Caco-2 (cell line): ENCODE measurements at regions of chr1 and their contacts with region 1.

Region 1: DNA sequence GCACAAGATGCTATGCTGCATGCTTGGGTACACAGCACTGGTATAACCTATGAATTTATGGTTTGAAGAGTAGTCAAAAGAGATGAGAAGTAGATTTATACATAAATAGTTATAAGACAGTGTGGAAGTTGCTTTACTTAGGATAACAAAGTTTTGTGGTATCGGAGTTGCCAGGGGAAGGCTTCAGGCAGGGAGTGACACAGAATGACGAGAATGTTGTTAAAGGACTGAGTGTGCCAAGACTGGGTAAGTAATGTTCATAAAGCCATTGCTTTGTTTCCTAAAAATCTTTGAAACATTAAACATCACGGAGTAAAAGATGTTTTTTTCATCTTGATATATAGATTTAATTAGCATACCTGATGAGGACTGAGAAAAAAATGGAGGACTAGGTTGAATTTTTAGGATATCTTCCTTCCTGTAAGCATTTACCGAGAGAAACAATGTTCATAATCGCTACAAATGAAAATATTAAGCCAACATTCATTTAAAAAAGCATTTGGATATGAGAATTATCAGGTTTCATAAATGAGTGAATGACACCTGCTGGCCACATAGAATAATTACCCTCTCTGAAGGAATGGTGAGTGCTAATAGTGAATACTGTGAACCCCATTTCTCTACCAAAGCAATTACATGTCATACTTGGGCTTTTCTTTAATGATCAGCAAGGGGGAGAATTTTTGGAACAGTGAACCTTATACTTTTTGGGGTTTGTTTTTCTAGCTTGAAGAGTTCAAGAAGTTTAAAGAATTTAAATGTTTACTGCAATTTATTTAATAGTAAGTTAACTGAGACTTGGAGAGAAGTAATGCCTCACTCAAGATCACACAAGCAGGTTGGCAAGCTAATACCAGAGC is 28.4 kb downstream of the EXTL2 start:
- DNase-seq: no peak
- H3K4me3 ChIP-seq: no peak overlapping the region
- H3K4me3 Mint-ChIP-seq: no peak overlapping the region
- H3K27ac Mint-ChIP-seq: no peak overlapping the region
- H3K4me1 ChIP-seq: no peaks in the 10 kb centered on the region
- H3K4me1 Mint-ChIP-seq: no peaks in the 10 kb centered on the region
- H3K27me3 ChIP-seq: no peaks in the 10 kb centered on the region
- H3K27me3 Mint-ChIP-seq: no peaks in the 10 kb centered on the region
- CTCF ChIP-seq: peak in 1 of 2 experiments; percentile 33

Region 2: DNA sequence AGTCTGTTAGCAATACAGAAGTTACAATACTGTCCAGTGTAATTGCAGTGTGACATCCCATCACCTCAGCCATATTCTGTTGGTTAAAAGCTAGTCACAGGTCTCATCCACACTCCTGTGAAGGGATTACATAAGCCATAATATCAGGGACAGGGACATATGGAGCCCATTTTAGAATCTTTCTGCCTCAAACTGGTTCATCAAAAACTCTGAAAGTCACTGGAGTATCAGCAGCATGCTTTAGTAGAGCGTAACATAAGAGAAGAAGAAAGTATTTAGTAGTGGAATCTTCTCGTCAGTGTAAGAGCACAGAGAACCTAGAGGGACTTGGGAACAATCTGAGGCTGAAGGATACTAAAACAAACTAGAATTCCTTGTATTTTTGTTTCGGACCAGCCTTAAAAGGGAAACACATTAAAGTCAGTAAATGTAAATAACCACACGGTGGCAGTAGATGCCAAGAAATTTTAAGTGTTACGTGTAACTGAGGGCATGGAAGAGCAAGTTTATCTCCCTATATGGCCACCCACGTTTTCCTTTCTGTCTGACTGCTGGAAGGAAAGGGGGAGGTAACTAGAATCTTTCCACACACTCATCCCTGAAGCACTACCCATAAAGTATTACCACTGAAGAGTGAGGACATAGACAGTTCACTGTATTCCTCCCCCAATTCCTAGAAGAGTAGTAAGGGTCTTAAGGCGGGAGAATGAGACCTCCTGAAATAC is 1057.7 kb before region 1 on chr1:
- CTCF ChIA-PET with region 1: no interaction called
- POLR2A ChIA-PET with region 1: no interaction called
- intact Hi-C with region 1: loop called (anchors 2 kb)
- DNase-seq: peak; percentile 49 to 58
- H3K4me3 ChIP-seq: no peak overlapping the region
- H3K4me3 Mint-ChIP-seq: no peak overlapping the region
- H3K27ac Mint-ChIP-seq: no peak overlapping the region
- H3K4me1 ChIP-seq: 0 out of 2 replicates have a peak, but pooled peaks cover 3% of the 10 kb centered on the region
- H3K4me1 Mint-ChIP-seq: no peaks in the 10 kb centered on the region
- H3K27me3 ChIP-seq: no peaks in the 10 kb centered on the region
- H3K27me3 Mint-ChIP-seq: no peaks in the 10 kb centered on the region
- CTCF ChIP-seq: peak in 1 of 2 experiments; percentile 3

Region 3: DNA sequence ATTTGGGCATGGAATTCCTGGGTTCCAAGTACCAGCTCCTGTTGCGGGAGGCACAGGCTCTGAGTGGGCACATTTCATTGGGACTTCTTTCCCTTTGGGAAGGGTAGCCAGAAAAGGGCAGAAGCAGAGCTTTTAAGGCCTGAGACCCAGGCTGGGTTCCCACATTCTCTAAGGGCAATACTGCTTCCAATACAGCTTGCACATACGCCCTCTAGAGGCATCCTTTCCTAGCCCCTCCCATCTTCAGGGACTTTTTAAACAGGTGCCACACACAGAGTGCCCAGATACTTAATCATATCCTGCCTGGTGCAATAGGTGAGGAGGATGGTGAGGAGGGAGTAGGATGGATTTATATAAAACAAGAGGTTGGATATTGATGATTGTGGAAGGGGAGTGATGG is 322.6 kb before region 1 on chr1:
- CTCF ChIA-PET with region 1: no interaction called
- POLR2A ChIA-PET with region 1: no interaction called
- intact Hi-C with region 1: loop called (anchors 10 kb)
- DNase-seq: peak in 1 of 2 experiments; percentile 26
- H3K4me3 ChIP-seq: no peak overlapping the region
- H3K4me3 Mint-ChIP-seq: no peak overlapping the region
- H3K27ac Mint-ChIP-seq: no peak overlapping the region
- H3K4me1 ChIP-seq: no peaks in the 10 kb centered on the region
- H3K4me1 Mint-ChIP-seq: no peaks in the 10 kb centered on the region
- H3K27me3 ChIP-seq: no peaks in the 10 kb centered on the region
- H3K27me3 Mint-ChIP-seq: no peaks in the 10 kb centered on the region
- CTCF ChIP-seq: peak in 1 of 2 experiments; percentile 41

Region 4: GRCh38 chr1:100606438-100606837 is 259.8 kb before region 1 on chr1:
- CTCF ChIA-PET with region 1: no interaction called
- POLR2A ChIA-PET with region 1: no interaction called
- intact Hi-C with region 1: loop called (anchors 1 kb)
- DNase-seq: no peak
- H3K4me3 ChIP-seq: no peak overlapping the region
- H3K4me3 Mint-ChIP-seq: no peak overlapping the region
- H3K27ac Mint-ChIP-seq: no peak overlapping the region
- H3K4me1 ChIP-seq: no peaks in the 10 kb centered on the region
- H3K4me1 Mint-ChIP-seq: no peaks in the 10 kb centered on the region
- H3K27me3 ChIP-seq: no peaks in the 10 kb centered on the region
- H3K27me3 Mint-ChIP-seq: no peaks in the 10 kb centered on the region
- CTCF ChIP-seq: peak; percentile 31 to 55

Region 5: GRCh38 chr1:100750005-100750885 is 116.0 kb before region 1 on chr1:
- CTCF ChIA-PET with region 1: interaction called, 3 read pairs
- POLR2A ChIA-PET with region 1: no interaction called
- intact Hi-C with region 1: loop called (anchors 2 kb)
- DNase-seq: peak in 1 of 2 experiments; percentile 3
- H3K4me3 ChIP-seq: no peak overlapping the region
- H3K4me3 Mint-ChIP-seq: no peak overlapping the region
- H3K27ac Mint-ChIP-seq: no peak overlapping the region
- H3K4me1 ChIP-seq: no peaks in the 10 kb centered on the region
- H3K4me1 Mint-ChIP-seq: no peaks in the 10 kb centered on the region
- H3K27me3 ChIP-seq: no peaks in the 10 kb centered on the region
- H3K27me3 Mint-ChIP-seq: peaks cover 11% of the 10 kb centered on the region
- CTCF ChIP-seq: no peak

Region 6: DNA sequence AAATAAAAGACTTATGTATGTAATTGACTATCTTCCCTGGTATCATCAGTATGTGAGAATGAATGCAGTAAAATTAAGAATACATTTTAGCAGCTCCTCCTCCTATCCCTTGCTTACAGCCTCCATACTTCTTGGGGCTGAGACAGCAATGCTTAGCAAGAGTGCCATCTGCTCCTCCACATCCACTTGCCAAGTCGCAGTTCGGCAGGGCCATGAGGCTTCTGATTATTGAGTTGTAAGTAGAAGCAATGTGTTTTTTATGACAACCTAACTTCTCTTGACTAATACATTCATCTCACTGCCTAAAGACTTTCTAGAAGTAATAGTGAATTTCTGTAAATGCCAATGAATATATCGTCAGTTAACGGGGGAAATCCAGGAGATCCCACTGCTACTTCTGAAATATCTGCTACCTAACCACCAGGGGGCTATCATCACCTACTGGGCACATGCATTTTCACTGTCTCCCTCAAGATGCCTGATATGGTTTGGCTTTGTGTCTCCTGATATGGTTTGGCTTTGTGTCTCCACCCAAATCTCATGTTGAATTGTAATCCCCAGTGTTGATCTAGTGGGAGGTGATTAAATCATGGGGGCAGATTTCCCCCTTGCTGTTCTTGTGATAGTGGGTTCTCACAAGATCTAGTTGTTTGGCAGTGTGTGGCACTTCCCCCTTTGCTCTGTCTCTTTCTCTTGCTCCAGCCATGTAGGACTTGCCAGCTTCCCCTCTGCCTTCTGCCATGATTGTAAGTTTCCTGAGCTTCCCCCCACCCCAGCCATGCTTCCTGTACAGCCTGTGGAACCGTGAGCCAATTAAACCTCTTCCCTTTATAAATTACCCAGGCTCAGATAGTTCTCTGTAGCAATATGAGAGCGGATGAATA is 31.3 kb before region 1 on chr1:
- CTCF ChIA-PET with region 1: no interaction called
- POLR2A ChIA-PET with region 1: no interaction called
- intact Hi-C with region 1: loop called (anchors 1 kb)
- DNase-seq: peak in 1 of 2 experiments; percentile 12
- H3K4me3 ChIP-seq: no peak overlapping the region
- H3K4me3 Mint-ChIP-seq: no peak overlapping the region
- H3K27ac Mint-ChIP-seq: no peak overlapping the region
- H3K4me1 ChIP-seq: no peaks in the 10 kb centered on the region
- H3K4me1 Mint-ChIP-seq: no peaks in the 10 kb centered on the region
- H3K27me3 ChIP-seq: no peaks in the 10 kb centered on the region
- H3K27me3 Mint-ChIP-seq: peaks cover 5% of the 10 kb centered on the region
- CTCF ChIP-seq: peak; percentile 41 to 46

Region 7: DNA sequence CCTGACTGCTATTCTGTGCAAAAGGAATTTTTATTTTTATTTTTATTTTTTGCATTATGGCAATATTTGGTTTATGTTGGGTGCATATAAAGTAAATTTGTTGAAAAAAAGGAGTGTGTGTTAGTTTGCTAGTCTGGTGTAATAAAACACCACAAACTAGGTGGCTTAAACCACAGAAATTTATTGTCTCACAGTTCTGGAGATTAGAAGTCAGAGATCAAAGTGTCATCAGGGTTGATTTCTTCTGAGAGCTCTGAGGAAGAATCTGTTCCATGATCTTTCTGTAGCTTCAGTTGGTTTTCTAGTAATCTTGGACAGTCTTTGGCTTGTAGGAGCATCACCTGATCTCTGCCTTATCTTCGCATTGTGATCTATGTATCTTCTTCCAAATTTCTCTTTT is 36.1 kb after region 1 on chr1:
- CTCF ChIA-PET with region 1: no interaction called
- POLR2A ChIA-PET with region 1: no interaction called
- intact Hi-C with region 1: no loop called
- DNase-seq: no peak
- H3K4me3 ChIP-seq: no peak overlapping the region
- H3K4me3 Mint-ChIP-seq: no peak overlapping the region
- H3K27ac Mint-ChIP-seq: no peak overlapping the region
- H3K4me1 ChIP-seq: no peaks in the 10 kb centered on the region
- H3K4me1 Mint-ChIP-seq: no peaks in the 10 kb centered on the region
- H3K27me3 ChIP-seq: no peaks in the 10 kb centered on the region
- H3K27me3 Mint-ChIP-seq: no peaks in the 10 kb centered on the region
- CTCF ChIP-seq: no peak